Endothelial cell of umbilical vein (primary cell): ENCODE measurements at regions of chr17 and their contacts with region 1.

Region 1: DNA sequence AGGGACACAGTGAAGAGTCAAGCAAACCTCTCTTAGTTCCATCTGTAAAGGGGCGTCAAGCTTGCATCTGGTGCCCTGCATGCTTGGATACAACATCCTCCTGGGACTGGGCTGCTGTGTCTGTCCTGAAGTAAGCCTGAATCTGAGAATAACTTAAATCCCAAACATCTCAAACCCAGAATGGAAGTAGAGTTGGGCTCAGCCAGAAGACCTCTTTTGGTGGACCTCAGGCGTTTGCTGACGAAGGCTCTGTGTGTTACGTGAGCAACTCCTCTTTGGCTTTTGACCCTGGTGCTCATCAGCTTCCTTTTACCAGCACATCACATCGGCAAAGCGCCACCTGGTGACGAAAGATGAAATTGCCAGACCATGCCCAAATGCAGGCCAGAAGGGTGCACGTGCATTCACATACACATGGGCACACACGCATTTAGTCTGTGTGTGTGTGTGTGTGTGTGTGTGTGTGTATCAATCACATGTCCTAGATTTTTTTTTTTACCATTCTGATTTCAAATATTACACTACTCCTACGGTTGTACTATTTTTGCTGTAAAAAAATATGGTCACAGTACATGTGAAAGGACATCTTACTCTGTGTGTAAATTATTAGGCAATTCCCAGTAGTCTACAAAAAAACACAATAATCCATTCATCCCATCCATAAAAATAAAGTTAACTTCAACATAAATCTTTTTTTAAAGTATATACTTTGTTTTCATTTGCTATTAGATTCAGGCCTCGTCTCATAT is 41.1 kb upstream of the FOXJ1 start:
- DNase-seq: peak; percentile 93
- H3K4me3 ChIP-seq: no peak overlapping the region
- H3K27ac ChIP-seq: no peak overlapping the region
- H3K4me1 ChIP-seq: peaks cover 8% of the 10 kb centered on the region
- H3K27me3 ChIP-seq: no peaks in the 10 kb centered on the region
- CTCF ChIP-seq: peak; percentile 86 to 88
- POLR2A ChIP-seq: no peak

Region 2: GRCh38 chr17:76072148-76072858 is 109.9 kb before region 1 on chr17 and contains the start of gene SRP68:
- CTCF ChIA-PET with region 1: no interaction called
- POLR2A ChIA-PET with region 1: no interaction called
- dilution Hi-C with region 1: no loop called
- intact Hi-C with region 1: no loop called
- DNase-seq: peak; percentile 94
- H3K4me3 ChIP-seq: peak within 1 kb of the TSS; percentile 59 to 95 (median 73)
- H3K27ac ChIP-seq: peak within 1 kb of the TSS; percentile 67
- H3K4me1 ChIP-seq: peaks cover 16% of the 10 kb centered on the region
- H3K27me3 ChIP-seq: peaks cover 34 to 40% of the 10 kb centered on the region in 2 experiments
- CTCF ChIP-seq: no peak
- POLR2A ChIP-seq: peak; percentile 96
- total RNA-seq, gene SRP68: 77.6 and 81.7 TPM in 2 replicates

Region 3: GRCh38 chr17:76121932-76122430 is 60.2 kb before region 1 on chr17:
- CTCF ChIA-PET with region 1: interaction called, 99 read pairs
- POLR2A ChIA-PET with region 1: interaction called, 5 read pairs
- dilution Hi-C with region 1: no loop called
- intact Hi-C with region 1: loop called (anchors 1 kb)
- DNase-seq: no peak
- H3K4me3 ChIP-seq: peak overlapping the region in 1 of 3 experiments; percentile 8
- H3K27ac ChIP-seq: peak overlapping the region; percentile 14
- H3K4me1 ChIP-seq: peaks cover 3% of the 10 kb centered on the region
- H3K27me3 ChIP-seq: no peaks in the 10 kb centered on the region
- CTCF ChIP-seq: no peak
- POLR2A ChIP-seq: no peak

Region 4: GRCh38 chr17:76141212-76142038 is 40.8 kb before region 1 on chr17 and contains the start of gene FOXJ1:
- CTCF ChIA-PET with region 1: interaction called, 23 read pairs
- POLR2A ChIA-PET with region 1: no interaction called
- dilution Hi-C with region 1: no loop called
- intact Hi-C with region 1: no loop called
- DNase-seq: peak; percentile 95
- H3K4me3 ChIP-seq: peak within 1 kb of the TSS in 2 of 3 experiments; percentile 39 to 56
- H3K27ac ChIP-seq: no peak within 1 kb of the TSS
- H3K4me1 ChIP-seq: peaks cover 19% of the 10 kb centered on the region
- H3K27me3 ChIP-seq: peaks cover 16 to 22% of the 10 kb centered on the region in 2 experiments
- CTCF ChIP-seq: no peak
- POLR2A ChIP-seq: no peak
- total RNA-seq, gene FOXJ1: not detected in 2 replicates

Region 5: GRCh38 chr17:76153640-76154039 is 28.6 kb before region 1 on chr17:
- CTCF ChIA-PET with region 1: interaction called, 17 read pairs
- POLR2A ChIA-PET with region 1: no interaction called
- dilution Hi-C with region 1: no loop called
- intact Hi-C with region 1: no loop called
- DNase-seq: no peak
- H3K4me3 ChIP-seq: no peak overlapping the region
- H3K27ac ChIP-seq: no peak overlapping the region
- H3K4me1 ChIP-seq: no peaks in the 10 kb centered on the region
- H3K27me3 ChIP-seq: peaks cover 4 to 19% of the 10 kb centered on the region in 2 experiments
- CTCF ChIP-seq: no peak
- POLR2A ChIP-seq: no peak

Region 6: DNA sequence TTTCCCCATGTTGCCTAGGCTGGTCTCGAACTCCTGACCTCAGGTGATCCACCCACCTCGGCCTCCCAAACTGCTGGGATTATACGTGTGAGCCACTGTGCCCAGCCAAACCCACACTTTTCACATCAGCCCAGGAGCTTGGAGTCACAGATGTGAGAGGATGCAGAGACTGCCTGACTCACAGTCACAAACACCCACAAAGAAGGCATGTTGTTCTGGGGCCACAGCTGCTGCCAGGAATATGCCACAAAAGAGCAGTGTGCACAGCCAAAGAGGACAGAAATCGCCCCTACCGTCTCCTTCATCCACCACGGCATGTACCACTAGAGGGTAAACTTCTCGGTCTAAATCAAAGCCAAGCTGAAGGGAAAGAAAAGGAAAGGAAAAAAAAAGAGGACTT is 16.0 kb before region 1 on chr17:
- CTCF ChIA-PET with region 1: interaction called, 13 read pairs
- POLR2A ChIA-PET with region 1: no interaction called
- dilution Hi-C with region 1: no loop called
- intact Hi-C with region 1: no loop called
- DNase-seq: no peak
- H3K4me3 ChIP-seq: no peak overlapping the region
- H3K27ac ChIP-seq: no peak overlapping the region
- H3K4me1 ChIP-seq: no peaks in the 10 kb centered on the region
- H3K27me3 ChIP-seq: peaks cover 6% of the 10 kb centered on the region in 2 experiments
- CTCF ChIP-seq: no peak
- POLR2A ChIP-seq: no peak

Region 7: GRCh38 chr17:76204277-76204676 is 22.1 kb after region 1 on chr17:
- CTCF ChIA-PET with region 1: interaction called, 13 read pairs
- POLR2A ChIA-PET with region 1: no interaction called
- dilution Hi-C with region 1: no loop called
- intact Hi-C with region 1: no loop called
- DNase-seq: no peak
- H3K4me3 ChIP-seq: no peak overlapping the region
- H3K27ac ChIP-seq: no peak overlapping the region
- H3K4me1 ChIP-seq: no peaks in the 10 kb centered on the region
- H3K27me3 ChIP-seq: no peaks in the 10 kb centered on the region
- CTCF ChIP-seq: no peak
- POLR2A ChIP-seq: no peak

Region 8: GRCh38 chr17:76264755-76265596 is 82.8 kb after region 1 on chr17 and contains the start of gene UBALD2:
- CTCF ChIA-PET with region 1: interaction called, 13 read pairs
- POLR2A ChIA-PET with region 1: no interaction called
- dilution Hi-C with region 1: no loop called
- intact Hi-C with region 1: no loop called
- DNase-seq: peak; percentile 100
- H3K4me3 ChIP-seq: peak within 1 kb of the TSS; percentile 78 to 84 (median 80)
- H3K27ac ChIP-seq: peak within 1 kb of the TSS; percentile 97
- H3K4me1 ChIP-seq: peaks cover 54% of the 10 kb centered on the region
- H3K27me3 ChIP-seq: no peaks in the 10 kb centered on the region
- CTCF ChIP-seq: no peak
- POLR2A ChIP-seq: peak; percentile 42
- total RNA-seq, gene UBALD2: 70.9 and 75.2 TPM in 2 replicates